Activated CD8-positive, alpha-beta memory T cell treated with anti-CD3 and anti-CD28 coated beads, Interleukin-2, amount 10 ng/mL, durations not matched to agents 7 days and 5 days (primary cell): ENCODE measurements at regions of chr10 and their contacts with region 1.

Region 1: GRCh38 chr10:116787893-116788665 is 45.7 kb upstream of the HSPA12A start:
- DNase-seq: peak; percentile 84
- ATAC-seq: peak; percentile 83
- H3K4me3 Mint-ChIP-seq: peak overlapping the region; percentile 26
- H3K27ac Mint-ChIP-seq: peak overlapping the region; percentile 28
- H3K4me1 Mint-ChIP-seq: peaks cover 17% of the 10 kb centered on the region
- H3K27me3 Mint-ChIP-seq: peaks cover 5% of the 10 kb centered on the region

Region 2: GRCh38 chr10:116597543-116597942 is 190.5 kb before region 1 on chr10:
- CTCF ChIA-PET with region 1: no interaction called
- DNase-seq: no peak
- ATAC-seq: no peak
- H3K4me3 Mint-ChIP-seq: no peak overlapping the region
- H3K27ac Mint-ChIP-seq: no peak overlapping the region
- H3K4me1 Mint-ChIP-seq: no peaks in the 10 kb centered on the region
- H3K27me3 Mint-ChIP-seq: no peaks in the 10 kb centered on the region

Region 3: DNA sequence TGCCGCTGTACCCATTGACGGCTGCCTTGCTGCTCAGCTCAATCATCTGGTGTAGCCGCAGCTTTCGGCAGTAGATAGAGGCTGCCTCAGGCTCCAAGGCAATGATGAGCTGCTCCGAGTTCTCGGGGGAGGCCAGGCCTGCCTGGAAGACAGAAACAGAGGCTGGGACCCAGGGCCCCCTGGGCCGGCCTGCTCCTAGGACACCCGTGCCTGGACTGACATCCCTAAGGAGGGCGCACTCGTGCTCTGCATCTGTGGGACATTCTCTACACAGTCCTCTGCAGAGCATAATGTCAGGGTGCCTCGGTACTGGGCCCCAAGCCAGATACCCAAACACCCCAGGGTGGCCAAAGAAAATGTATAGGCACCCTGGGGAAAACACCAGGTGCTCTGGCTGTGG is 104.3 kb before region 1 on chr10:
- CTCF ChIA-PET with region 1: interaction called, 46 read pairs
- DNase-seq: no peak
- ATAC-seq: no peak
- H3K4me3 Mint-ChIP-seq: no peak overlapping the region
- H3K27ac Mint-ChIP-seq: no peak overlapping the region
- H3K4me1 Mint-ChIP-seq: no peaks in the 10 kb centered on the region
- H3K27me3 Mint-ChIP-seq: no peaks in the 10 kb centered on the region

Region 4: GRCh38 chr10:117492504-117492903 is 704.4 kb after region 1 on chr10:
- CTCF ChIA-PET with region 1: no interaction called
- DNase-seq: no peak
- ATAC-seq: no peak
- H3K4me3 Mint-ChIP-seq: no peak overlapping the region
- H3K27ac Mint-ChIP-seq: no peak overlapping the region
- H3K4me1 Mint-ChIP-seq: peaks cover 3% of the 10 kb centered on the region
- H3K27me3 Mint-ChIP-seq: peaks cover 24% of the 10 kb centered on the region